ENCODE measurements at regions of chrX and their contacts with region 1.

Region 1: DNA sequence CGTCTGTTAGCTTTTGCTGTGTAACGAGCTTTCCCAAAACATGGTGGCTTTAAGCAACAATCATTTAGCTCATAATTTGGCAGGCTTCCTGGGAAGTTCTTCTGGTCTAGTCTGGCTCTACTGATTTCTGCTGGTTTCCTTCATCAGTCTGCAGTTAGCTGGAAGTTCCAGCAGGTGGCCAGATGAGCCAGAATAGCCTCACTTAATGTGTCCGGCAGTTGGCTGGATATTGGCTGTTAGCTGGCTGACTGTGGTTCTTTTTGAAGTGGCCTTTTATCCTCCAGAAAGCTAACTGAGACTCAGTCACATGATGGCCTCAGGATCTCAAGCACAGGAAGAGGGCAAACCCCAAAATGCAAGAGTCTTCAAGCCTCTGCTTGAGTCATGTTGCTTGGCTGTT is 34.9 kb downstream of the FTHL17 start:
- DNase-seq: peak; percentile 64

Region 2: DNA sequence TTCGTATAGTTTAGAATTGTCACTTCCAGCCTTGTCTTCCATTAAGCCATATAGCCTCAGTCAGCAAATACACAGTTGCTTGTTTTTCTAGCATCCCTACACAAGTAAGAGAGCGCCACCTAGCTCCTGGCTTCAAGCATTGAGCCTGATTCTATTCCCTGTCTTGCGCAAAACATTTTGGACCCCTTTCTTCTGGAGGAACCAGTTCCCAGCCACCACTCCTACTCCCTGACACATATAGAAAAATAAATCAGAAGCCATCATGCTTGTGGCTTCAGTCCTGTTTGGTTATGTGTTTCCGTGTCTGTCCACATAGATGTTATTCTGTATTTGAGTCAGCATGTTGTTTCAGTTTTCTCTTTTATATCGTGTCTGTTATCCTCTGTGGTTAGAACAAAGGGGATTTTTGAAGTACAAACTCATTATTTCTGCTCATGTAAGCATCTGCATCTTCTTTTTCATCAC is 323.8 kb before region 1 on chrX:
- in situ Hi-C with region 1: no loop called
- DNase-seq: peak; percentile 75

Region 3: DNA sequence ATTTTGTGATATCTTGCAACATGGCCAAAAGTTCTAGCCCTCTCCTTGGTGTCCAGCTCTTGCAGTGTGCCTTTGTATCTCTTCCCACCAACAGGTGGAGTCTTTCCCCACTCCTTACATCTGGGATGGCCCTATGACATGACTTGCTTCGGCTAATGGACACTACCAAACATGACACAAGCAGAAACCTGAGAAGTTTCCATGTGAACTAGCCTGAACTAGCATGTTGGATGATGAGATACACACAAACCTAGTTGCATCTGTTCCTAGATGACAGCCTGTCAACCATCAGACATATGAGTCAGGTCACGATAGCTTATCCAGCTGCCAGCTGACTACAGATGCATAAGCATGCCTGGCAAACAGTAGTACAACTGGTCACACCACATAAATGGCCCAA is 242.5 kb after region 1 on chrX:
- in situ Hi-C with region 1: loop called (anchors 25 kb)
- DNase-seq: peak; percentile 21

Region 4: DNA sequence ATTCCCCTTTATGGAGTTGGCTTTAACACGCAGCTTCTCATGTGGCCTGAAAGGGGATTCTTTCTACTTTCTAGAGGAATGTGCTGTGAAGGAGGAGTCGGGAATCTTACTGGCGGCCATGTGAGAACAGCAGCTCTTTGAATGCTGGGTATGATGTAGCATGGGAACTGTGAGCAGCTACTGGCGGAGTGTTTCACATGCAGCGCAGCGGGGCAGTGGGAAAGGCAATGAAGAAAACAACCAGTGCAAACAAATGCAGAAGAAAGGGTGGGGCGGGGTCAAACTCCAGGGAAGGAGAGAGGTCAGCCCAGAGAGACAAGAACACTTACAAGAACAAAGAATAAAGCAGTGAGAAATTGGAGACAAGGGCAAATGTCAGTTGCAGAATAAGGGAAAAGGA is 398.7 kb after region 1 on chrX:
- in situ Hi-C with region 1: loop called (anchors 25 kb)
- DNase-seq: no peak

Region 5: GRCh38 chrX:31658360-31658759 is 621.5 kb after region 1 on chrX:
- in situ Hi-C with region 1: loop called (anchors 25 kb)
- DNase-seq: peak; percentile 35

Measured in KBM-7 (cell line).